Activated CD4-positive, alpha-beta memory T cell treated with anti-CD3 and anti-CD28 coated beads for 36 hours (primary cell): ENCODE measurements at regions of chr20 and their contacts with region 1.

Region 1: DNA sequence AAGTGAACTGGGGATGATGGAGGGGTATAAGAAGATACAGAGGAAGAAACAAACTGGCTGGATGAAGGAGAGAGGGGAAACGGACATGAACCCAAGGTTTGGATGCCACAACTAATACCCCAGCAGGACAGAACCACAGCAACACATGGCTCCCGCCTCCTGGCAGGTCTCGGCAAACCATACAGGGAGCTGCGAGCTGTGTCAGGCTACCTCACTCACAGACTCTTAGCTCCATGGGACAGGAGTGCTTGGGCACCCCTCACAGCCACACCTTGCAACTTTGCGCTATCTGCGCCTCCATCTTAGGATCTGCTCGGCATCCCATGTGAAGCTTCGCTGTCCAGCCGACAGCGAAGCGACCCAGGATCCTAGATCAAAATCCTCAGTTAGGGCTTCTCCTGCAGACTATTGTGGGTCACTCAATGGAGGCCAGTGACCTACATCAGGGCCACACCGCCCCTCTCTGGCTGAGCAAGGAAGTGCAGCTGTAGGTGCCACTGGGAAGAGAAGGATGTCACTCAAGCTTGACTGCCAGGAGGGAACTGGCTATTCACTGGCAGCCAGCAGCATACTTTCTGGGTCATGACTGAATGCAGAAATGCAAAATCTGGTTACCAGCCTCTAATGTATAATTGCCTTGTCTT is 174.4 kb upstream of the RIN2 start:
- DNase-seq: peak; percentile 57
- H3K4me3 Mint-ChIP-seq: no peak overlapping the region
- H3K27ac Mint-ChIP-seq: no peak overlapping the region
- H3K4me1 Mint-ChIP-seq: no peaks in the 10 kb centered on the region
- H3K27me3 Mint-ChIP-seq: no peaks in the 10 kb centered on the region

Region 2: GRCh38 chr20:19205977-19206396 is 377.7 kb before region 1 on chr20:
- CTCF ChIA-PET with region 1: interaction called, 17 read pairs
- POLR2A ChIA-PET with region 1: no interaction called
- intact Hi-C with region 1: loop called (anchors 2 kb)
- DNase-seq: peak; percentile 69
- H3K4me3 Mint-ChIP-seq: no peak overlapping the region
- H3K27ac Mint-ChIP-seq: no peak overlapping the region
- H3K4me1 Mint-ChIP-seq: no peaks in the 10 kb centered on the region
- H3K27me3 Mint-ChIP-seq: peaks cover 18% of the 10 kb centered on the region